Lower lobe of right lung (tissue), 2 donors: ENCODE measurements at regions of chr6 and their contacts with region 1.

Region 1: GRCh38 chr6:82260997-82261686 is 13.6 kb upstream of the IBTK start:
- DNase-seq: no peak
- ATAC-seq: no peak
- H3K4me3 ChIP-seq: no peak overlapping the region
- H3K27ac ChIP-seq: no peak overlapping the region
- H3K4me1 ChIP-seq: no peaks in the 10 kb centered on the region
- H3K27me3 ChIP-seq: no peaks in the 10 kb centered on the region
- CTCF ChIP-seq: no peak

Region 2: GRCh38 chr6:82381278-82381677 is 120.1 kb after region 1 on chr6:
- intact Hi-C with region 1: no loop called
- DNase-seq: no peak
- ATAC-seq: no peak
- H3K4me3 ChIP-seq: no peak overlapping the region
- H3K27ac ChIP-seq: no peak overlapping the region
- H3K4me1 ChIP-seq: no peaks in the 10 kb centered on the region
- H3K27me3 ChIP-seq: no peaks in the 10 kb centered on the region
- CTCF ChIP-seq: no peak

Region 3: DNA sequence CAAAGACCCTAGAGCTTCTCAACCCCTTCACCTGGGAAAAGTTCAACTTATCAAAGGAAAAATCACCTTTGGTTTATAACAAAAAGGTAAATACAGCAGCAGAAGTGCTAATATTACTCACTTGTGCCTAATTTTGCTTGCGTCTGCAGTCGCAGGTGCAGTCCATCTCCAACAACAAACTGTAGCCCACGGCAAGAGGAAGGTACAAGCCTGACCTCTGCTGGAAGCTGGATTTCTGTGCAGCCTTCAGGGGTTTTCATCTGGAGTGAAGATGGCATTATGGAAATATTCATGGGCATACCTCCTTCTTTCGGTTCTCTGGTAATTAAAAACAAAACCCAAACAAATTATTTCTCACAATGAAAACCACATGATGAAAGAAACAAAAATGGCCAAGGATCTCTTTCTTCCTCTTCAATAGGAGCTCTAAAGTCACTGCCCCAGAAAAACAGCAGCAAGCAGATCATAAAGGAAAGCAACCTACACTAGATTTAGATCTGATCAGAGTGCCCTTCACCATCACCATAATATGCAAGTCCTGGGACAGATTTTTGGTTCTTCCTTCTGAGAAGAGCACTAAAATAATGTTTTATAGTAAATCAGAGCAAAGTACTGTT is 796.7 kb after region 1 on chr6:
- intact Hi-C with region 1: loop called (anchors 10 kb)
- DNase-seq: no peak
- ATAC-seq: peak; percentile 62 to 75
- H3K4me3 ChIP-seq: no peak overlapping the region
- H3K27ac ChIP-seq: no peak overlapping the region
- H3K4me1 ChIP-seq: no peaks in the 10 kb centered on the region
- H3K27me3 ChIP-seq: no peaks in the 10 kb centered on the region
- CTCF ChIP-seq: peak; percentile 66